HCT116 (cell line): ENCODE measurements at regions of chr14 and their contacts with region 1.

Region 1: GRCh38 chr14:75307700-75308379 is 29.2 kb downstream of the FOS start:
- DNase-seq: peak; percentile 69
- ATAC-seq: peak; percentile 85
- H3K4me3 ChIP-seq: no peak overlapping the region
- H3K27ac ChIP-seq: no peak overlapping the region
- H3K4me1 ChIP-seq: peaks cover 0 to 8% of the 10 kb centered on the region in 2 experiments; a peak in 2 of 4 replicates
- H3K27me3 ChIP-seq: no peaks in the 10 kb centered on the region
- CTCF ChIP-seq: peak; percentile 86 to 94 (median 94)
- POLR2A ChIP-seq: no peak
- RAD21 ChIP-seq: peak; percentile 96

Region 2: DNA sequence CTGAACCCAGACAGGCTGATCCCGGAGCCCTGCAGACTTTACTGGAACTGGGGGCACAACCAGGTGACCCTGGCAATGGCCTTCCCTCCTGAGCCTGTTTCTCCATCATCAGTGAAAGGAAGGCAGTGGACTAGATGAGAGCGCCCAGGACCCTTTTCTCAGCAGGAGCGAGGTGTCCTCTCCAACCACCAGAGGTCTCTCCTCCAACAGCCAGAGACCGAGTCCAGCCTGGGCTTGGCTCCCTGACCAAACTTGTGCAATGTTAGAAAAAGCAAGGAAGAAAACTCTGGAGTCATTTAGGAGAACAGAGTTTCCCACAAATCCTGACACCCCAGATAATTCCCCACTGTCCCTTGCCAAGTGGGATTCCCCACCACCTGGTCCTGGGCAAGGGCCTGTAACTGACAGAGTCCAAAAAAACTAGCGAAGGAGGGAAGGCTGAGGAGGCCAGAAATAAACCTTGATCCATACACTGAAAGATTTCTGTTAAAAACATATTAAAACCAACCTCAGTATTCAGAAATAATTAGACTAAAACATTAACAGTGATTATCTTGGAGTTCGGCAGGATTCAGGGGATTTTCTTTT is 393.8 kb before region 1 on chr14:
- CTCF ChIA-PET with region 1: no interaction called
- POLR2A ChIA-PET with region 1: no interaction called
- RAD21 ChIA-PET with region 1: no interaction called
- intact Hi-C with region 1: loop called (anchors 1 kb)
- DNase-seq: peak; percentile 12
- ATAC-seq: peak; percentile 82
- H3K4me3 ChIP-seq: no peak overlapping the region
- H3K27ac ChIP-seq: no peak overlapping the region
- H3K4me1 ChIP-seq: peaks cover 10 to 21% of the 10 kb centered on the region in 2 experiments; a peak in 3 of 4 replicates
- H3K27me3 ChIP-seq: no peaks in the 10 kb centered on the region
- CTCF ChIP-seq: peak; percentile 68 to 85 (median 75); a peak in 5 of 6 replicates
- POLR2A ChIP-seq: no peak
- RAD21 ChIP-seq: peak; percentile 82

Region 3: GRCh38 chr14:75132382-75133086 is 175.3 kb before region 1 on chr14:
- CTCF ChIA-PET with region 1: interaction called, 5 read pairs
- POLR2A ChIA-PET with region 1: no interaction called
- RAD21 ChIA-PET with region 1: interaction called in 1 of 2 experiments, 7 read pairs
- intact Hi-C with region 1: loop called (anchors 1 kb)
- DNase-seq: peak; percentile 65
- ATAC-seq: peak; percentile 79
- H3K4me3 ChIP-seq: no peak overlapping the region
- H3K27ac ChIP-seq: no peak overlapping the region
- H3K4me1 ChIP-seq: peaks cover 10 to 15% of the 10 kb centered on the region in 2 experiments
- H3K27me3 ChIP-seq: no peaks in the 10 kb centered on the region
- CTCF ChIP-seq: peak; percentile 64 to 79 (median 75)
- POLR2A ChIP-seq: no peak
- RAD21 ChIP-seq: peak; percentile 88

Region 4: GRCh38 chr14:75487155-75487671 is 179.4 kb after region 1 on chr14:
- CTCF ChIA-PET with region 1: interaction called, 45 read pairs
- POLR2A ChIA-PET with region 1: interaction called, 3 read pairs
- RAD21 ChIA-PET with region 1: interaction called, 4 read pairs
- intact Hi-C with region 1: loop called (anchors 1 kb)
- DNase-seq: no peak
- ATAC-seq: no peak
- H3K4me3 ChIP-seq: no peak overlapping the region
- H3K27ac ChIP-seq: no peak overlapping the region
- H3K4me1 ChIP-seq: peaks cover 0 to 3% of the 10 kb centered on the region in 2 experiments; a peak in 1 of 4 replicates
- H3K27me3 ChIP-seq: no peaks in the 10 kb centered on the region
- CTCF ChIP-seq: no peak
- POLR2A ChIP-seq: no peak
- RAD21 ChIP-seq: no peak

Region 5: GRCh38 chr14:75560962-75561432 is 253.2 kb after region 1 on chr14:
- CTCF ChIA-PET with region 1: interaction called, 25 read pairs
- POLR2A ChIA-PET with region 1: no interaction called
- RAD21 ChIA-PET with region 1: interaction called, 3 read pairs
- intact Hi-C with region 1: loop called (anchors 1 kb)
- DNase-seq: peak; percentile 63
- ATAC-seq: peak; percentile 99
- H3K4me3 ChIP-seq: no peak overlapping the region
- H3K27ac ChIP-seq: no peak overlapping the region
- H3K4me1 ChIP-seq: peaks cover 8 to 14% of the 10 kb centered on the region in 2 experiments; a peak in 3 of 4 replicates
- H3K27me3 ChIP-seq: no peaks in the 10 kb centered on the region
- CTCF ChIP-seq: peak; percentile 78 to 89 (median 89)
- POLR2A ChIP-seq: no peak
- RAD21 ChIP-seq: peak; percentile 87